GM12878 (cell line): ENCODE measurements at regions of chr21 and their contacts with region 1.

Region 1: GRCh38 chr21:25313829-25314228 is 293.5 kb downstream of the MRPL39 start:
- DNase-seq: no peak
- ATAC-seq: peak; percentile 38; the same call in 2 of the 3 replicates
- H3K4me3 ChIP-seq: no peak overlapping the region
- H3K27ac ChIP-seq: no peak overlapping the region
- H3K4me1 ChIP-seq: no peaks in the 10 kb centered on the region
- H3K27me3 ChIP-seq: no peaks in the 10 kb centered on the region
- CTCF ChIP-seq: peak; percentile 30 to 46 (median 31); a peak in 4 of 6 replicates
- EP300 ChIP-seq: no peak
- POLR2A ChIP-seq: no peak
- RAD21 ChIP-seq: peak; percentile 67

Region 2: DNA sequence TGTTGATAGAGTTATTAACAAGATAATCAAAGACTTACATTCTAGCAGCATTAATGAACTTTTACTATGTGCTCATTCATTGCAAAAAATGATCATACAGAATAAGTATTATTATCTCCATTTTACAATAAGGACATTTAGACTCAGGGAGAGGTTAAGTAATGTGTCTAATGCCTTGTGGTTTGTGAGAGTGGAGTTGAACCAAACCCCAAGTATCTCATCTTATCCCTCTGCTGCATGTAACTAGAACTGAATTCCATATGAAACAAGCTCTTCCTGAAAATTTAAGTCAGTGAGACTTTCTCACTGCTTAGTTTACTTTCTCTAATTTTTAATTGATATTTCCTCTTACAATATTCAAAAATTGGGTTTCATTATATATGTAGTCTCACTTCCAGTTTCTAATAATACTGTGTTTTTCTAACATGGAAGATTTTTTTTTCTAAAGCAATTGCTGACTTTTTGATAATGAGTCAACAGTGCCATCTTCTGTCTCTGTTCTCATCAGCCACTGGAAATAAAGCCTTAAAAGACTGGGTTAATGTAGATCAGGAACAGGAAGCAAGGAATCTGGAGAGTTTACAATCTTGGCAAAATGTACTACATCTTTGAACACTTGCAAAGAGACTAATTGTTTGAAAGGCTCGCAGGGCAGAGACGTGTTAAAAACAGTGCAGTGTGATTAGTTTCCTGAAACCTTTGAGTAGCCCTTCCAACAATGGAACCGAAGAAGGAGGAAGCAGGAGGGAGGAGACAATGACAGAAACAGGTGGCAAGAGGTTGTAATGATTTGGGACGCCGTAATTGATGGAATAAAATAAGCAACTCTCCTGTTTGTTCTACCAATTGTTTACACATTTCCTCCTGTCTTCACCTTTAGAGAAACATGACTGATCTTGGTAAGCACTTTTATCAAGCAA is 274.1 kb before region 1 on chr21:
- CTCF ChIA-PET with region 1: no interaction called
- POLR2A ChIA-PET with region 1: no interaction called
- RAD21 ChIA-PET with region 1: no interaction called
- SMC1A ChIA-PET with region 1: interaction called, 5 read pairs
- in situ Hi-C with region 1: no loop called
- intact Hi-C with region 1: loop called (anchors 5 kb)
- DNase-seq: peak; percentile 82
- ATAC-seq: peak; percentile 89
- H3K4me3 ChIP-seq: peak overlapping the region; percentile 20; the same call in 1 of the 2 replicates
- H3K27ac ChIP-seq: 0 out of 2 replicates have a peak overlapping the region, but pooled peaks have one; percentile 4
- H3K4me1 ChIP-seq: 0 out of 2 replicates have a peak, but pooled peaks cover 2% of the 10 kb centered on the region
- H3K27me3 ChIP-seq: no peaks in the 10 kb centered on the region
- CTCF ChIP-seq: peak; percentile 36 to 67 (median 66)
- EP300 ChIP-seq: 0 out of 4 replicates have a peak, but pooled peaks of 1 of the 2 experiments have one; percentile 40
- POLR2A ChIP-seq: no peak
- RAD21 ChIP-seq: peak; percentile 71

Region 3: GRCh38 chr21:25283720-25284119 is 30.1 kb before region 1 on chr21:
- CTCF ChIA-PET with region 1: interaction called, 20 read pairs
- POLR2A ChIA-PET with region 1: no interaction called
- RAD21 ChIA-PET with region 1: interaction called, 15 read pairs
- SMC1A ChIA-PET with region 1: interaction called, 14 read pairs
- in situ Hi-C with region 1: no loop called
- intact Hi-C with region 1: no loop called
- DNase-seq: no peak
- ATAC-seq: peak; percentile 76
- H3K4me3 ChIP-seq: no peak overlapping the region
- H3K27ac ChIP-seq: no peak overlapping the region
- H3K4me1 ChIP-seq: no peaks in the 10 kb centered on the region
- H3K27me3 ChIP-seq: no peaks in the 10 kb centered on the region
- CTCF ChIP-seq: peak; percentile 34 to 42 (median 35); a peak in 5 of 6 replicates
- EP300 ChIP-seq: no peak
- POLR2A ChIP-seq: no peak
- RAD21 ChIP-seq: peak; percentile 60